Esophagus muscularis mucosa (tissue), 4 donors: ENCODE measurements at regions of chr9 and their contacts with region 1.

Region 1: DNA sequence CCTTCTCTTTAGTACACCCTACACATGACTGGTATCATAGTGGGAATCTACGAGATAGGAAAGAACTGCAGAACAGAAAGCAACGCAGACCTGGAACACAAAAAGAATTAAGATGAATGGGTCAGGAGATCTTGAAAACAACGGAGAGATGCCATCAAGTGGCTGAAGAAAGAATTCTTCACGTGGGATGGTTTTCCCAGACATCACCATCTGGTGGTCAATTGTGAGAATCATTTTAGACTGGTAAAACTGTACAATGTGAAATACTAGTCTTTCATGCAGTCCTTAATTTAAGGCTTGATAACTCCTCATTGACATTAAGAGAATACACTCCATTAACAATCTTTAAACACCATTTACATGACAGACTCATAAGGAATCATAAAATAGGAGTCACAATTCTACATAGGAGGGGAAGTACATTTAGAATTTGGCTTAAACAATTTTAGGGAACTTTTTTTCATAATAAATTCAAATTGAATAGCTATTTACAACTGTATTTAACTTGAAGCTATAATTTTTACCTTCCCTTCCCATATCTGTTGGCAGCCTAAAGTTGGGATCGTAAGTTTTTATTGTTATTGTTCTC is 128.4 kb upstream of the TRPM3 start:
- DNase-seq: no peak
- H3K4me3 ChIP-seq: no peak overlapping the region
- H3K27ac ChIP-seq: no peak overlapping the region
- H3K4me1 ChIP-seq: no peaks in the 10 kb centered on the region
- H3K27me3 ChIP-seq: peaks cover 0 to 11% (median 0%) of the 10 kb centered on the region in 4 donors
- CTCF ChIP-seq: peak; percentile 35 to 62 (median 54)
- EP300 ChIP-seq: no peak
- POLR2A ChIP-seq: no peak

Region 2: DNA sequence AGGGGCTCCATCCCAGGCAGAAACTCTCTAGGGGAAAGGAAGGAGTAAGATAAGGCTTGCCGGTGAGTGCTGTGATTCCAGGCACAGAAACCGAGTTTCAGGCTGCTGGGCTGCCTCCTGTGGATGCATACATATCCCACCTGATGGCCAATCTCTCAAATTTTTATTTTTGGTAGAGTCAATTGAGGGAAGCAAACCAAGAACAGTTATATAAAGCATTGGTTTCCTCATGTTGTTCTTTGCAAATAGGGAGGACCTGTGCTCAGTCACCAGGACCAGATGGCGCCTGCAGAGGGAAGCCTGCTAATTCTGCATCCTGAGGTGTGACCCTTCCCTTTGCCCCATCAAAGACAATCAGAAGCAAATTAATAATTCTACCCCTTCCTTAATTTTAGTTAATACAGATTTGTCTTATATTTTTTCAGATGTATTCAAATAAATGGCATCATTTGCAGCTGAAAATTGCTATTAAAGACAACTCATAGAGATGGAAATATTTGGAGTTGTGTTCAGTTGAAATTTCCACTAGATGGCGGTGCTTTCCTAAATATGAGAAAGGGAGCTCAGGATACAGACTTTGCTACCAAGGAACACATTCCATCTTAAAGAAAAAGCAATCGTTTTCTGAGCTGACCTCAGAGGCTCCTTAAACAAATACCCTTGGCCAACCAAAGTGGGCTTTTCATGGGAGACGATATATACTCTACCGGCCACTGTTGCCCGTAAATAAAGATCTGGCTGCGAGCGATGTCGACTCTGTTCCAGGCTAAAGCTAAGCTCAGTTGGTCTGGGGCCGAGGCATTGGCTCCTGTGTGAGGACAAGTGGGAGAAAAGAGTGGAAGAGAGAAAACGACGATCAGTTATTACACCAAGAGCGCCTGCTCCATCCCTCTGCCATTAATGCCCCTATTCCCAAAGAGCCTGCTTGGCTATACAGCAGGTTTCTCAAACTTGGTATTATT is 609.7 kb before region 1 on chr9:
- intact Hi-C with region 1: loop called (anchors 2 kb)
- DNase-seq: no peak
- H3K4me3 ChIP-seq: no peak overlapping the region
- H3K27ac ChIP-seq: no peak overlapping the region
- H3K4me1 ChIP-seq: peaks cover 0 to 5% (median 0%) of the 10 kb centered on the region in 4 donors
- H3K27me3 ChIP-seq: no peaks in the 10 kb centered on the region
- CTCF ChIP-seq: peak; percentile 56 to 68 (median 58)
- EP300 ChIP-seq: no peak
- POLR2A ChIP-seq: no peak

Region 3: DNA sequence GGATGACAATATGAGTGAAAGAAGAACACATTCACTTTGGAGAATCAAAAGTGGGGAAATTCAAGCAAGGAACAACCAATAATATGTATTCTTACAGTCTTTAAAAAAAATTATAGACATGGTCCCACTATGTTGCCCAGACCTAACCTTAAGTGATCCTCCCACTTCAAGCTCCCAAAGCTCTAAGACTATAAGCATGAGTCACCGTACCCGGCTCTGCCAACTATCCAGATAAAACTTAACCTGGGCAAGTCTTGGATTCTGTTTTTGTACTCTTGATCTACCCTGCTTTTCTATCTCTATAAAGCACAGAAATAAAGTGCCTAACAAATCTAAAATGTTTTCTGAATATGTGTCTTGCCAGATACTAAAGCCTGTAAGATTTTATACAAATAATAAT is 487.6 kb after region 1 on chr9:
- intact Hi-C with region 1: no loop called
- DNase-seq: no peak
- H3K4me3 ChIP-seq: no peak overlapping the region
- H3K27ac ChIP-seq: no peak overlapping the region
- H3K4me1 ChIP-seq: no peaks in the 10 kb centered on the region
- H3K27me3 ChIP-seq: no peaks in the 10 kb centered on the region
- CTCF ChIP-seq: no peak
- EP300 ChIP-seq: no peak
- POLR2A ChIP-seq: no peak

Region 4: GRCh38 chr9:72203205-72203803 is 953.5 kb after region 1 on chr9:
- intact Hi-C with region 1: no loop called
- DNase-seq: no peak
- H3K4me3 ChIP-seq: no peak overlapping the region
- H3K27ac ChIP-seq: no peak overlapping the region
- H3K4me1 ChIP-seq: no peaks in the 10 kb centered on the region
- H3K27me3 ChIP-seq: no peaks in the 10 kb centered on the region
- CTCF ChIP-seq: no peak
- EP300 ChIP-seq: no peak
- POLR2A ChIP-seq: no peak